ENCODE measurements at regions of chr6 and their contacts with region 1.

Region 1: DNA sequence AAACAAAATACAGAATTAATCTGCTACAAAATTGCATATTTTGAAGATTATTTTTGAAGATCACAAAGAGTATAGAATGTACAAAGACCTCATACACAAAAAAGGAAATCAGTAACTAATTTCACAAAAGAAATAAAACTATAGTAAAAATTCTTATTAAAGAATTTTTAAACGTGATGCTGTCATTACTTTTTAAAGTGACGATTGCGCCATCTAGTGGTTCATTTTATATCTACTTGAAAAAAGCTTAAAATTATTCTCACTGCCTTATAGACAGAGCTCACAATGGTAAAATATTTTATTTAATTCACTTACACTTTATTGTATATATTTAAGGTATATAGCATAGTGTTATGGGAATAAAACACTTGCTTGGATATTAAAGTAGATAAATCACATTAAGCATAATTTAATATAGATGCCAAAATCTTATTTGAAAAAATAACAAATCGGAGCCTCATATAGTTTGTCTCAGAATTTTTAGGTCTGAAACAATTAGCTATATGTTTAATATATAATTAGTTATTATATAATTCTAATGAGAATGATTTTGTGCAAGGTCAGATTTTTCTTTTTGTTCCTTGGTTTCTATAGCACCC is 128.8 kb downstream of the PHF3 start:
- DNase-seq: no peak
- ATAC-seq: no peak

Region 2: DNA sequence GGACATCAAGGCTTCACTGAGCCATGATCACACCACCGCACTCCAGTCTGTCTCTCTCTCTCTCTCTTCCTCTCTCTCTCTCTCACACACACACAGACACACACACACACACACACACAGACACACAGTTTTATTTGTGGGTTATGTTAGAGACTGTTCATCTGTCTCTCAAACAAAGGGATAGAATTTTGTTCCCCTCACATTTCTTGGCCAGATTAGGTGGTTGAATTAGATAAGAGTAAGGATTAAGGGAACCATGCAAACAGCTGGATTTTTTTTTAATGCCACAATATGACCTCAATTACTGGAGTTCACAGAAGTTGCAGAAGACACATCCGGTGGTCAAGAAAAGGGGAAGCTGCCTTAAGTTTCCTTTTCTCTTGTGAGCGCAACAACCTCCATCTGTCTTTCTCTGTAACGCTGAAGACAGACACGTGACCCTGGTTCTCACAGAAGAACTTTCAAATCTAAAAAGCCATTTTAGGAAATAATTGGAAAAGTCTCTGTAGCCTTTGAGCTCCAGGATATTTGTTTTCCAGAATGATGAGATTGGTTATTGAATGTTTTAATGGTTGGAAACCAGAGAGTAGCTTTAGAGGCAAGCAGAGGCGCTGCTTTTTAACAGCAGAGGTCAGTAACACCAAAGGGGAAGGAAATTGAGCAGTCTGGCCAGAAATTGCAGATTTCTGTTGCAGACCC is 411.7 kb before region 1 on chr6:
- intact Hi-C with region 1: loop called (anchors 2 to 10 kb)
- DNase-seq: no peak
- ATAC-seq: peak; percentile 74 to 77

Region 3: DNA sequence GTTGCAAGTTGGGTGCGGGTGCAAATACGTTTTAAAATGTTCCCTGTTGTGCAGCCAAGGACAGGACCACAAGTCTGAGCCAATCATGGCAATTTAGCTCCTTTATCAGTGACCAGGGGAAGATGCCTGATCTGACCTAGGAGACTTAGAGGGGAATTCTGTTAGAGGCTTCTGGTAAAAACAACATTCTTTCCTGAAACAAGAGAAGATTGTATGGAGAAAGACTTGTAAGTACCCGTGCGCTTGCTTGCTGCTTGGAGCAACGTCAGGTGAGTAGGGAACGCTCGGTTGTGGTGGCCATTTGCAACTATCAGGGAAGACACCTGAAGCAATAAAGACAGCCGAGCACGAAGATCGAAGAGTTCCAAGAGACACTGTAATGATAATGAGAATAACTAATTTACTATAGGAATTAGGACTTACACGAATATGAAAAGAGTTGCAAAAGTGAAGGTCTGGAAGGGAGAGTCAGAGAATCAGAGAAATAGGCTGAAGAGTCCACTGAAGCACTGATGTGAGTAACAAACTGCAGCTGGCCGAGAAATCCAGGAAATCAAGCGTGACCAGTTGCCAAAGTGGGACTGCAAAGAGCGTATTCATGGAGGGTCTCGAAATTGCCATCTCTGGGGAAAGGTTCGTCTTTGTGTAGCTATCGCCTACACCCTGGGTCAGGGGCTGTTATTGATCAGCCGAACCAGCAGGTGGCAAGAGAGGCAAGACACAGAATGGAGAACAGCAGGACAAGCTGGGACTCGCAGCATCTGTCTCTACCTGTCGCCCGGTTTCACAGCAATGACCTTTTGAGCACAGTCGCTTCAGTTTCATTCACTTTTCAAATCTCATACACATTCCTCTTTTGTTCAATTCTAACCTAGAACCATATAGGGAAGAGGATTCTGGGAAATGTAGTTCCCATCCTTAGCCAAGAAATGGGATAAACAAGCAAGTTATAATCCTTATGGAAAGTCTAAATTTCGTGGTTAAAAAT is 166.1 kb before region 1 on chr6:
- intact Hi-C with region 1: loop called (anchors 2 to 5 kb)
- DNase-seq: peak; percentile 65
- ATAC-seq: peak; percentile 89 to 97

Measured in left cardiac atrium (tissue), 4 donors.